ENCODE measurements at regions of chr2 and their contacts with region 1.

Region 1: DNA sequence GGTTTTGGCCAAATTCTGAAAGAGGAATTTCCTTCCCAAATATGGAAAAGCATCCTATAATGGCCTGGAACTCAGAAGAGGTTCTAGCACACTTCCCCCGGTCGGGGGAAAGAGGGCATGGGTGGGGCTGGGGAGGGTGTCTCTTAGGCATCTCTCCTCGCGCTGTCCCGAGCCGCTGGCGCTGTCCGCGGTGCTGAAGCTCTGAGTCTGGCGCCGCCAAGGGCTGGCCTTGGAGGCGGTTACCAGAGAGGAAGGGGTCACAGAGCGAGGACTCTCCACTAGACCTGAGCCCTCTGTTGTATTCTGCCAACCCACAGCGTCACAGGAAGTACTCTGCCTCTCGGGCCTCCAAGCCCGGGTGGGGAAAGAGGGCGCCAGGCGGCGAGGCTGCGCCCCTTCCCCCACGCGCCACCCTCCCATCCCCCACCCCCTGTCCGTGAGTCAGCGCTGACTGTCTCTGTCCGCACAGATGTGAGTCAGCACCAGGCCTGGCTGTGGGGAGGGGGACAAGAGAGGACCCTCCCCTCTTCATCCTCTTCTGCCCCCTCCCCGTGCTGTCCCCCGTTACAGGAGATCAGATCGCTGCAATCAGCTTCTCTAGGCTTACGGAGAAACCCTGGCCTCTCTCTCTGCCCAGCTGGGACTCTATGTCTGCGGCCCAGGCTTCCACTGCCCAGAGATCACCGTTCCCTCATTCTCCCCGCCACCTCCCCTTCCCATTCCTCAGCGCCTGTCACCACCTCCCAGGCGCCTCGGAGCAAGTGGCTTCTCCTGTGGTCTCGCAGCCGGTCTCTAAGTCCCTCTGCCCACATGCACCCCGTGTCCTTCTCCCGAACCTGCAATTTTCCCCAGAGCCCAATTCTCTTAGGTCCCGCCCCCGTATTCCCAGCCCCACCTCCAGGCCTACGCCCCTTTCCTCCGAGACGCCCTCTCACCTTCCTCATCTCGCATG is 783 bp downstream of the PTPRN start:
- DNase-seq: peak in 1 of 2 experiments; percentile 63
- H3K4me3 ChIP-seq: no peak overlapping the region
- H3K27ac ChIP-seq: no peak overlapping the region
- H3K4me1 ChIP-seq: no peaks in the 10 kb centered on the region
- H3K27me3 ChIP-seq: peaks cover 44% of the 10 kb centered on the region
- CTCF ChIP-seq: no peak

Region 2: DNA sequence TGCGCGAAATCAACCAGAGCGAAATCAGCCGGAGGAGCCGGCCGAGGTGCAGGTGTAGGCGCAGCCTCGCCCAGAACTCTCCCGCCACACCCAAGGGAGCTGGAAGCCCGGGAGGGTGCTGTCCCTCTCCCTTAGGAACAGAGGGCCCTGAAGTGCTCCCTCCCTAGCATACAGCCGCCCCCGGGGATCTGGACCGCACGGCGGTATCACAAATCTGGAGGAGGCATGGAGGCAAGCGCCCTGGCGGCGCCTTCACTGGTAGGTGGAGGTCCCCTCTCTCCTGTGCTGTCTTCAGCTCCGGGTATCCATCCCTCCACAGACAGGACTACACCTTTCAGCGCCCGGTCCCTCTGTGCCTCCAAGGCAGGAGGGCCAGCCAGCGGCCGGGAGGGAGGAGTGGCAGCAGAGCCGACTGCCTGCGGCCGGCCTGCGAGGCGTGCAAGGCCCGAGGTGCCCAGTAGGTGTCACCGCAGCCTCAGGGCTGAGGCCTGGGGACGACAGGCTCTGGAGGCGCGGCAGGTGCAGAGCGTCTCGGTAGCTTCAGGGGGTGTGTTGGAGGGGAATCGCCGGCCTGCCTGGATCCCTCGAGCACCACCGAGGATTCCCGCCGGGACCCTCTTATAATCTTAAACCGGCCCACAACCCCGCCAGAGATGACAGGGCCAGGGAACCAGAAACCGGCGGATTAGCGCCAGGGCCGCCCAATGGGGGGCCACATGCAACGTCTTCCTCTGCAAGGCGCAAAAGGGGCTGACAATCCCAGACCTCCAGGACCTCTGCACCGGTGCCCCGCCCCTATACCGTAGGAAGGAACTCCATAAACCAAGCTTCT is 250.5 kb before region 1 on chr2:
- CTCF ChIA-PET with region 1: no interaction called
- POLR2A ChIA-PET with region 1: no interaction called
- intact Hi-C with region 1: loop called (anchors 10 kb)
- DNase-seq: peak in 1 of 2 experiments; percentile 69
- H3K4me3 ChIP-seq: no peak overlapping the region
- H3K27ac ChIP-seq: no peak overlapping the region
- H3K4me1 ChIP-seq: no peaks in the 10 kb centered on the region
- H3K27me3 ChIP-seq: peaks cover 70% of the 10 kb centered on the region
- CTCF ChIP-seq: peak; percentile 80

Region 3: DNA sequence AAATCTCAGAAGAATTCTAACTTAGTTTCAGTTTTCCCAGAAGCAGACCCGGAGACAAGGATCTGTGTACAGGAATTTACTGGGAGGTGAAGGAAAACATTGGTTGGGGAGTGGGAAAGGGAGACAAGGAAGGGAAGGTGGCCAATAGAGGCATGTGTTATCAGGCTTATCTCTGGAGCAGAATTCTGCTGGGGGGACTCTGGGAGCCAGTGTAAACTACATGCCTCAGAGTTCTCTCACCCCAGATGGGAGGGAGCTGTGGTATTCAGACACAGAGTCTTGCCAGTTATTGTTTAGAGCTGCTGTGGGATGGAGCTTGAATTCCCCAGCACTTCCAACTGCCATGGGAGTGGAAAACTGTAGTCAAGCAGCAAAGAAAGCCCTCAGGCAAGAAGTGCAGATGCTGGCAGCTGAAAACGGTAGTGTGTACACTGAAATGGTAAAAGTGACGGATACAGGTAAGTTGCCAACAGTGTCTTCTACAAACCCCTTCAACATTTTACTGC is 60.3 kb after region 1 on chr2:
- CTCF ChIA-PET with region 1: no interaction called
- POLR2A ChIA-PET with region 1: no interaction called
- intact Hi-C with region 1: loop called (anchors 5 kb)
- DNase-seq: peak; percentile 46 to 65
- H3K4me3 ChIP-seq: no peak overlapping the region
- H3K27ac ChIP-seq: no peak overlapping the region
- H3K4me1 ChIP-seq: peaks cover 4% of the 10 kb centered on the region
- H3K27me3 ChIP-seq: no peaks in the 10 kb centered on the region
- CTCF ChIP-seq: no peak

Measured in PC-9 (cell line).